B cell (primary cell): ENCODE measurements at regions of chr11 and their contacts with region 1.

Region 1: DNA sequence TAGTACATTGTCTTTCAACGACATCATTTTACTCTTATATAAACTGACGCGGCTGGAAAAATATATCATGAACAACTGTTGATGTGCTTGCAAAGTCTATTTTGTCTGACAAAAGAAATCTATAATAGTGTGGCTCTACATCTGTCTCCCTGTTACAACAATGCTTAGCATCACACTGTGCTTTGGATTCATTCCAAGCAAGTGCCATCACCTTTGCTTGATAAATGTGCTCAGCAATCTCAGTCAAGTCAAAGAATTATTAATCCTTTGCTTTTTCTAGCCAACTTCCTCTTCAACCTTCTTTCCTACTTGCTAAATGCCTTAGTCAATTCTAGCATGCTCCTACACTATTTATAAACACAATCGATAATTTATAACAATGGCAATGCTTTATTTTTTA is 140.5 kb downstream of the FCHSD2 start:
- DNase-seq: no peak
- ATAC-seq: no peak
- H3K4me3 ChIP-seq: peak overlapping the region in 1 of 5 experiments; percentile 5
- H3K4me3 Mint-ChIP-seq: no peak overlapping the region
- H3K27ac ChIP-seq: peak overlapping the region; percentile 86 to 87
- H3K27ac Mint-ChIP-seq: peak overlapping the region; percentile 75
- H3K4me1 ChIP-seq: peaks cover 66 to 70% of the 10 kb centered on the region in 2 donors
- H3K4me1 Mint-ChIP-seq: peaks cover 70% of the 10 kb centered on the region
- H3K27me3 ChIP-seq: no peaks in the 10 kb centered on the region
- H3K27me3 Mint-ChIP-seq: no peaks in the 10 kb centered on the region
- CTCF ChIP-seq: no peak

Region 2: DNA sequence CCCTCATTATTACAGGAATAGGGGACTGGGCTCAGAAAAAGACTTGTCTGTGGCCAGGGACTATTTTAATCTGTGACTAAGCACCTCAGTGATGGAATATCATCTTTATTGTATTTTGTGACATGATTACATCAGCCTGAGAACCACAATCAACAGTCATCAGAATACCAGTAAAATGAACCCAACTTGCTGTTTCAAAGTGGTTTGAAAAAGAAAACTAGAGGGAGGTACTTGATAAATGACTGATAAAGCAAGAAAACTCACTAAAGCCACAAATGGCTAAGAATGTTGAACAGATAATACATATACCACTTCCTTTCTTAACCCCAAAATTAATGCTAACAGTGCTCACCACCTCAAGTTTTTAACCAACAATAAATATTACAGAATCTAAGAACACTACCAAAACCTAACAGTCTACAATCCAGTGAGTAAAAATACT is 31.7 kb before region 1 on chr11:
- CTCF ChIA-PET with region 1: no interaction called
- POLR2A ChIA-PET with region 1: no interaction called
- intact Hi-C with region 1: loop called (anchors 5 kb)
- DNase-seq: no peak
- ATAC-seq: no peak
- H3K4me3 ChIP-seq: no peak overlapping the region
- H3K4me3 Mint-ChIP-seq: no peak overlapping the region
- H3K27ac ChIP-seq: peak overlapping the region; percentile 35 to 63
- H3K27ac Mint-ChIP-seq: peak overlapping the region; percentile 56
- H3K4me1 ChIP-seq: peaks cover 24 to 37% of the 10 kb centered on the region in 2 donors
- H3K4me1 Mint-ChIP-seq: peaks cover 65% of the 10 kb centered on the region
- H3K27me3 ChIP-seq: no peaks in the 10 kb centered on the region
- H3K27me3 Mint-ChIP-seq: no peaks in the 10 kb centered on the region
- CTCF ChIP-seq: no peak

Region 3: DNA sequence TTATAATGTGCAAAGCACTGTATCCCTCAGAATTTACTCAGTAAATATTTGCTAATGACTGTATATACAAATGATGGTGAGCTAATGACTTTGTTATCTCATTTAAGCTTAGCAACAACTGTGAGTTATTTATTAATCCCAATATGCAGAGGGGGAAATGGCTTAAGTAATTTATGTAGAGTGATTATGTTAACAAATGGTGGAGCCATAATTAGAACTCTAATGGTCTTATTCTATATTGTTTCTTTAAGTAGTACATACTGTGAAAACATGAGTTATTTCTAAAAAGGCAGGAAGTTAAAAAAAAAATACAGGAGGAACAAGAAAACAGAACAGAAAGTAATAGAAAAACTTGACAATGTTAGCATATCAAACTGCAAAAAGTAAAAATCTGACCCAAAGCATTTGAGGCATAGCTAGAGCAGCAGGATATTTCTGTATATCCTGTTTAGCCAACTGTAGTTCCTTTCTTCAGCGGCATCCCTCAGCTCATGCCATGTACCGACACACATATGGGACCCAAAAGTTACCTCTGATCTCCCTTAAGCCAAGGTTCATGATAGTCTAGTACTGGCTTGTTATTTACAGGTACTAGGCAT is 46.3 kb after region 1 on chr11:
- CTCF ChIA-PET with region 1: no interaction called
- POLR2A ChIA-PET with region 1: no interaction called
- intact Hi-C with region 1: loop called (anchors 2 kb)
- DNase-seq: peak; percentile 80
- ATAC-seq: peak; percentile 91
- H3K4me3 ChIP-seq: peak overlapping the region; percentile 14 to 52 (median 32)
- H3K4me3 Mint-ChIP-seq: peak overlapping the region; percentile 79
- H3K27ac ChIP-seq: peak overlapping the region; percentile 81 to 89
- H3K27ac Mint-ChIP-seq: peak overlapping the region; percentile 88
- H3K4me1 ChIP-seq: peaks cover 68 to 80% of the 10 kb centered on the region in 2 donors
- H3K4me1 Mint-ChIP-seq: peaks cover 66% of the 10 kb centered on the region
- H3K27me3 ChIP-seq: no peaks in the 10 kb centered on the region
- H3K27me3 Mint-ChIP-seq: no peaks in the 10 kb centered on the region
- CTCF ChIP-seq: no peak

Region 4: GRCh38 chr11:73114110-73114824 is 112.7 kb after region 1 on chr11:
- CTCF ChIA-PET with region 1: no interaction called
- POLR2A ChIA-PET with region 1: interaction called, 12 read pairs
- intact Hi-C with region 1: no loop called
- DNase-seq: no peak
- ATAC-seq: no peak
- H3K4me3 ChIP-seq: no peak overlapping the region
- H3K4me3 Mint-ChIP-seq: no peak overlapping the region
- H3K27ac ChIP-seq: peak overlapping the region in 1 of 2 donors; percentile 46
- H3K27ac Mint-ChIP-seq: peak overlapping the region; percentile 85
- H3K4me1 ChIP-seq: peaks cover 29 to 44% of the 10 kb centered on the region in 2 donors
- H3K4me1 Mint-ChIP-seq: peaks cover 72% of the 10 kb centered on the region
- H3K27me3 ChIP-seq: no peaks in the 10 kb centered on the region
- H3K27me3 Mint-ChIP-seq: no peaks in the 10 kb centered on the region
- CTCF ChIP-seq: no peak